ENCODE measurements at regions of chr20 and their contacts with region 1.

Region 1: GRCh38 chr20:41339507-41340326 is 904 bp upstream of the LPIN3 start:
- DNase-seq: peak; percentile 87
- H3K4me3 ChIP-seq: peak overlapping the region in 1 of 2 experiments; percentile 46; a peak in 1 of 4 replicates
- H3K27ac ChIP-seq: no peak overlapping the region
- H3K4me1 ChIP-seq: peaks cover 0 to 5% of the 10 kb centered on the region in 2 experiments; a peak in 1 of 4 replicates
- H3K27me3 ChIP-seq: no peaks in the 10 kb centered on the region
- CTCF ChIP-seq: peak; percentile 96
- EP300 ChIP-seq: no peak
- RAD21 ChIP-seq: peak; percentile 90

Region 2: GRCh38 chr20:40896814-40897700 is 442.7 kb before region 1 on chr20:
- CTCF ChIA-PET with region 1: no interaction called
- POLR2A ChIA-PET with region 1: no interaction called
- DNase-seq: peak; percentile 80
- H3K4me3 ChIP-seq: no peak overlapping the region
- H3K27ac ChIP-seq: peak overlapping the region in 1 of 2 experiments; percentile 90; a peak in 2 of 4 replicates
- H3K4me1 ChIP-seq: peaks cover 0 to 18% of the 10 kb centered on the region in 2 experiments; a peak in 2 of 4 replicates
- H3K27me3 ChIP-seq: 0 out of 2 replicates have a peak, but pooled peaks cover 3% of the 10 kb centered on the region
- CTCF ChIP-seq: no peak
- EP300 ChIP-seq: peak in 1 of 2 experiments; percentile 72; a peak in 1 of 4 replicates
- RAD21 ChIP-seq: no peak; the same call in none of the 2 replicates

Region 3: GRCh38 chr20:40990542-40991120 is 349.1 kb before region 1 on chr20:
- CTCF ChIA-PET with region 1: interaction called, 24 read pairs
- POLR2A ChIA-PET with region 1: no interaction called
- DNase-seq: peak; percentile 84
- H3K4me3 ChIP-seq: no peak overlapping the region; a peak in 1 of 4 replicates
- H3K27ac ChIP-seq: no peak overlapping the region
- H3K4me1 ChIP-seq: peaks cover 2 to 11% of the 10 kb centered on the region in 2 experiments; a peak in 2 of 4 replicates
- H3K27me3 ChIP-seq: no peaks in the 10 kb centered on the region
- CTCF ChIP-seq: peak; percentile 85
- EP300 ChIP-seq: no peak
- RAD21 ChIP-seq: peak; percentile 94

Region 4: DNA sequence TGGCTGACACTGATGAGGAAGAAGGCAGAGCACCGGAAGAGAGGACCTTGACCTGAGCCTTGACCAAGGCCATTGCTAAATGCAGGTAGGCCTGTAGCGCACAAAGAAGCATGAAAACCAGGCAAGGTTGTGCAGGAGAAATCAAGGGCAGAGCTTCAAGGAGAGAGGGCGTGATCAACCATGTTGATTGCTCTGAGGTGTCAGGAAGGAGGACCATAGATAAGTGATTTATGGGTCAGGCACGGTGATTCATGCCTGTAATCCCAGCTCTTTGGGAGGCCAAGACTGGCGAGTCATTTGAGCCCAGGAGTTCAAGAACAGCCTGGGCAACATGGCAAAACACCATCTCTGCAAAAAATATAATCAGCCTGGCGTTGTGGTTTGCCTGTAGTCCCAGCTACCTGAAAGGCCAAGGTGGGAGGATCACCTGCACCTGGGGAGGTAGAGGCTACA is 190.0 kb before region 1 on chr20:
- CTCF ChIA-PET with region 1: interaction called, 11 read pairs
- POLR2A ChIA-PET with region 1: no interaction called
- DNase-seq: no peak
- H3K4me3 ChIP-seq: no peak overlapping the region
- H3K27ac ChIP-seq: no peak overlapping the region
- H3K4me1 ChIP-seq: peaks cover 10 to 29% of the 10 kb centered on the region in 2 experiments; a peak in 2 of 4 replicates
- H3K27me3 ChIP-seq: no peaks in the 10 kb centered on the region
- CTCF ChIP-seq: no peak
- EP300 ChIP-seq: no peak
- RAD21 ChIP-seq: no peak

Region 5: GRCh38 chr20:41185013-41185757 is 154.5 kb before region 1 on chr20:
- CTCF ChIA-PET with region 1: interaction called, 19 read pairs
- POLR2A ChIA-PET with region 1: no interaction called
- DNase-seq: peak; percentile 52
- H3K4me3 ChIP-seq: no peak overlapping the region
- H3K27ac ChIP-seq: peak overlapping the region in 1 of 2 experiments; percentile 34; a peak in 2 of 4 replicates
- H3K4me1 ChIP-seq: peaks cover 0 to 12% of the 10 kb centered on the region in 2 experiments; a peak in 1 of 4 replicates
- H3K27me3 ChIP-seq: no peaks in the 10 kb centered on the region
- CTCF ChIP-seq: no peak
- EP300 ChIP-seq: no peak
- RAD21 ChIP-seq: peak; percentile 56

Region 6: DNA sequence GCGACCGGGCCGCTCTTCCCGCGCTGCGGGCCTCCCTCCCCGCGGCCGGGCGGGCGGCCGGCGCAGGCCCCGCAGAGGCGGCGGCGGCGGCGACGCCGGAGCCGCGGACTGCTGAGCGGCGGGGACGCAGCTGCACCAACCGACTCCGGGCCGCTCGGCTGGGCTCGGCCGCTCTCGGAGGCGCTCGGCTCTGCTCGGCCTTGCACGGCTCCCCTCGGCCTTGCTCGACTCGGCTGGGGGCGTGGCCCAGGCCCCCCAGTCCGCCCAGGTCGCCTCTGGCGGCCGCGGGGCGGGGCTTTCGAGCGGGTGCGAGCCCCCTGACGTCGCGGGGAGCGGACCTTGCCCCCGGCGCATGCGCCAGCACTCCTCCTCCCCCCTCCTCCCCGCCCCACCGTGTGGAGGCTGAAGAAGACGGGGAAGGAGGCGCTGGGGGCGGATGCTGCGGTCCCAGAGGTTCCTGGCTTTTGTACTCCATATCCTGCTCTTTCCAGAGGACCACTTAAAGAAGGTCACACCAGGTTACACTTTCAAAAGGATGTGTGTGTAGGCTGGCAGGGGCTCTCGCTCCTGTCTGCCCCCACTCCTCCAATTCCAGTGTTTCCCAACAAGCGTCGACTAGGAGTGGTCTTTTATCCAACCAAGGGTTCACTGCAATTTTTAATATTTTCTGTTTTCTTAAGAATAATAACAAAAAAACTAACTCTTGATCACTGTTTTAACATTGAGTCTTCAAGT is 22.0 kb before region 1 on chr20 and contains the start of gene ZHX3:
- CTCF ChIA-PET with region 1: interaction called, 18 read pairs
- POLR2A ChIA-PET with region 1: no interaction called
- DNase-seq: peak; percentile 100
- H3K4me3 ChIP-seq: peak within 1 kb of the TSS; percentile 87 to 90
- H3K27ac ChIP-seq: peak within 1 kb of the TSS; percentile 85 to 92
- H3K4me1 ChIP-seq: peaks cover 8% of the 10 kb centered on the region in 2 experiments; a peak in 3 of 4 replicates
- H3K27me3 ChIP-seq: no peaks in the 10 kb centered on the region
- CTCF ChIP-seq: no peak
- EP300 ChIP-seq: no peak
- RAD21 ChIP-seq: no peak
- polyA plus RNA-seq, gene ZHX3: 6.0 and 6.9 TPM in 2 replicates

Region 7: DNA sequence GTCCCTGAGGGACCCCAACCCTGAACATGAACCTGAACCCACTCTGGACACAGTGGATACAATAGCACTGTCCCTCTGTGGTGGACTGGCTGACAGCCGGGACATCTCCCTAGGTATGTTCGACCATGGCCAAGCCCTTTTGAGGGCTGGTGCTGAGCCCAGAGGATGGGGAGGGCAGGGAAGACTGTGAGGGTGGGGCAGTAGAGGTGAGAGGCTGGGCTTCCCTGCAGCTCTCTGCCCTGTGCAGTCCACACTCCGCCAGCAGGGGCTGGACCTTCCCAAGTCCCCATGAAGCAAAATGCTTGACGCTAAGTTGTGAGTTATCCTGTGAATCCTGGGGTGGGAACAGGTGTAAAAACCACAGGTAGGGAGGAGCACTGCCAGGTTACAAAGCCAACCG is 12.4 kb after region 1 on chr20:
- CTCF ChIA-PET with region 1: interaction called, 55 read pairs
- POLR2A ChIA-PET with region 1: no interaction called
- DNase-seq: no peak
- H3K4me3 ChIP-seq: no peak overlapping the region
- H3K27ac ChIP-seq: no peak overlapping the region
- H3K4me1 ChIP-seq: no peaks in the 10 kb centered on the region
- H3K27me3 ChIP-seq: no peaks in the 10 kb centered on the region
- CTCF ChIP-seq: no peak; the same call in 1 of the 2 replicates
- EP300 ChIP-seq: no peak
- RAD21 ChIP-seq: no peak

Region 8: DNA sequence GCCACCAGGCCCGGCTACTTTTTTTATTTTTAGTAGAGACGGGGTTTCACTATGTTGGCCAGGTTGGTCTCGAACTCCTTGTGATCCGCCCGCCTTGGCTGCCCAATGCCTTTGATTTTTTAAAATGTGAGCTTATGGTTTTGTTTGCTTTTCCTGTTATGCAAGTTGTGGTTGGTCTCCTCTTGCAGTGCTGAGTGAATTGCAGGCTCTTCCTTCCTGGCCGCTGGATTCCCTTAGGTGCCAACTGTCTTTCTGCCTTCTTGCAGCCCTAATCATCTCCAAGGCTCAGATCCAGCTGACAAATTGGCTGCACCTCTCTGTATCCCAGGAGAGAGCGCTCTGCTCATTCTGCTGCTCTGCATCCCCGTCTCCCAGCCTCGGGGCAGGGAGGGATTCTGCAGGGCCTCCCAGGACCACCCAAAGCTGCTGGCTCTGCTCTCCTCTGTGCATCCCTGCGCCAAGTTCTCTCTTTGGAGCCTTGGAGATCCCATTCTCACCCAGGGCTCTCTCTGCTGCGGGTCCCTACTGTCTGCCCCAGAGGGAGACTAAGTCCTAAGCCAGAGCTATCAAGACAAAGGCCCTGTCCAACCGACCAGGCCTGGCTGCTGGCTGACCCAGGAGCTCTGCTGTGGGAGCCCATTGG is 41.0 kb after region 1 on chr20:
- CTCF ChIA-PET with region 1: interaction called, 11 read pairs
- POLR2A ChIA-PET with region 1: no interaction called
- DNase-seq: no peak
- H3K4me3 ChIP-seq: no peak overlapping the region
- H3K27ac ChIP-seq: no peak overlapping the region
- H3K4me1 ChIP-seq: no peaks in the 10 kb centered on the region; a peak in 1 of 4 replicates
- H3K27me3 ChIP-seq: peaks cover 6% of the 10 kb centered on the region; the same call in 1 of the 2 replicates
- CTCF ChIP-seq: no peak
- EP300 ChIP-seq: no peak
- RAD21 ChIP-seq: no peak

Region 9: GRCh38 chr20:41424546-41424945 is 84.8 kb after region 1 on chr20:
- CTCF ChIA-PET with region 1: no interaction called
- POLR2A ChIA-PET with region 1: no interaction called
- DNase-seq: no peak
- H3K4me3 ChIP-seq: no peak overlapping the region
- H3K27ac ChIP-seq: no peak overlapping the region
- H3K4me1 ChIP-seq: no peaks in the 10 kb centered on the region; a peak in 2 of 4 replicates
- H3K27me3 ChIP-seq: no peaks in the 10 kb centered on the region
- CTCF ChIP-seq: no peak
- EP300 ChIP-seq: no peak
- RAD21 ChIP-seq: no peak

Region 10: GRCh38 chr20:41475507-41475906 is 135.8 kb after region 1 on chr20:
- CTCF ChIA-PET with region 1: no interaction called
- POLR2A ChIA-PET with region 1: no interaction called
- DNase-seq: no peak
- H3K4me3 ChIP-seq: no peak overlapping the region
- H3K27ac ChIP-seq: peak overlapping the region; percentile 10 to 39; a peak in 3 of 4 replicates
- H3K4me1 ChIP-seq: peaks cover 0 to 11% of the 10 kb centered on the region in 2 experiments; a peak in 3 of 4 replicates
- H3K27me3 ChIP-seq: no peaks in the 10 kb centered on the region
- CTCF ChIP-seq: no peak
- EP300 ChIP-seq: no peak
- RAD21 ChIP-seq: no peak

Measured in SK-N-SH (cell line).